ENCODE measurements at regions of chr17 and their contacts with region 1.

Region 1: DNA sequence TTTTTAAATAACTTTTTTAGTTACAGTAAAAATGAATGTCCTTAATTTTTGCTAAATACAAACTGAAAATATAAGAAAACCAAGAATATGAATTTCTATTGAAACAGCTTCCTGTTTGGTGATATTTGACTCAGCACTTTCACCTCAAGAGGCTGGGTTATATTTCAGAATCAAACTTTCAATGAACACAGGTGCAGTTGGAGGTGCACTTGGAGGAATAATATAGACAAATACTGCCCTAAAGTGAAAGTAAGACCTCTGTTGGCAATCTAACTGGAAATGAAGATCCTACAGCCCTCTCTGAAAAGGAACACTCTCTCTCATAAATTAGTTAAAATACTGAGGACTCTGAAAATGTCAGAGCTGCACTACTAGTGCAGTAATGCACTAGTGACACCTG is 106.2 kb downstream of the BRIP1 start:
- DNase-seq: peak; percentile 10
- H3K4me3 ChIP-seq: no peak overlapping the region
- H3K27ac ChIP-seq: no peak overlapping the region
- H3K4me1 ChIP-seq: peaks cover 10% of the 10 kb centered on the region
- CTCF ChIP-seq: no peak

Region 2: GRCh38 chr17:61574542-61575174 is 182.5 kb before region 1 on chr17:
- CTCF ChIA-PET with region 1: no interaction called
- POLR2A ChIA-PET with region 1: no interaction called
- intact Hi-C with region 1: no loop called
- DNase-seq: peak; percentile 65
- H3K4me3 ChIP-seq: no peak overlapping the region
- H3K27ac ChIP-seq: no peak overlapping the region
- H3K4me1 ChIP-seq: no peaks in the 10 kb centered on the region
- CTCF ChIP-seq: peak; percentile 73

Region 3: DNA sequence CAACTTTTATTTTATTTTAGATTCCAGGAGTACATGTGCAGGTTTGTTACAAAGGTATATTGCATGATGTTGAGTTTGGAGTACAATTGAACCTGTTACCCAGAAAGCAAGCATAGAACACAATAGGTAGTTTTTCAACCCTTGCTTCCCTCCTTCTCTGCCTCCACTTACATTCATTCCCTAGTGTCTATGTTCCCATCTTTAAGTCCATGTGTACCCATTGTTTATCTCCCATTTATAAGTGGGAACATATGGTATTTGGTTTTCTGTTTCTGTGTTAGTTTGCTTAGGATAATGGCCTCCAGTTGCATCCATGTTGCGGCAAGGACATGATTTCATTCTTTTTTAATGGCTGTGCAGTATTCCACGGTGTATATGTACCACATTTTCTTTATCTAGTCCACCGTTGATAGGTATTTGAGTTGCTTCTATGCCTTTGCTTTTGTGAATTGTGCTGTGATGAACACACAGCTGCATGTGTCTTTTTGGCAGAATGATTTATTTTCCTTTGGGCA is 52.2 kb before region 1 on chr17:
- CTCF ChIA-PET with region 1: no interaction called
- POLR2A ChIA-PET with region 1: no interaction called
- intact Hi-C with region 1: loop called (anchors 5 kb)
- DNase-seq: no peak
- H3K4me3 ChIP-seq: no peak overlapping the region
- H3K27ac ChIP-seq: no peak overlapping the region
- H3K4me1 ChIP-seq: no peaks in the 10 kb centered on the region
- CTCF ChIP-seq: no peak

Region 4: DNA sequence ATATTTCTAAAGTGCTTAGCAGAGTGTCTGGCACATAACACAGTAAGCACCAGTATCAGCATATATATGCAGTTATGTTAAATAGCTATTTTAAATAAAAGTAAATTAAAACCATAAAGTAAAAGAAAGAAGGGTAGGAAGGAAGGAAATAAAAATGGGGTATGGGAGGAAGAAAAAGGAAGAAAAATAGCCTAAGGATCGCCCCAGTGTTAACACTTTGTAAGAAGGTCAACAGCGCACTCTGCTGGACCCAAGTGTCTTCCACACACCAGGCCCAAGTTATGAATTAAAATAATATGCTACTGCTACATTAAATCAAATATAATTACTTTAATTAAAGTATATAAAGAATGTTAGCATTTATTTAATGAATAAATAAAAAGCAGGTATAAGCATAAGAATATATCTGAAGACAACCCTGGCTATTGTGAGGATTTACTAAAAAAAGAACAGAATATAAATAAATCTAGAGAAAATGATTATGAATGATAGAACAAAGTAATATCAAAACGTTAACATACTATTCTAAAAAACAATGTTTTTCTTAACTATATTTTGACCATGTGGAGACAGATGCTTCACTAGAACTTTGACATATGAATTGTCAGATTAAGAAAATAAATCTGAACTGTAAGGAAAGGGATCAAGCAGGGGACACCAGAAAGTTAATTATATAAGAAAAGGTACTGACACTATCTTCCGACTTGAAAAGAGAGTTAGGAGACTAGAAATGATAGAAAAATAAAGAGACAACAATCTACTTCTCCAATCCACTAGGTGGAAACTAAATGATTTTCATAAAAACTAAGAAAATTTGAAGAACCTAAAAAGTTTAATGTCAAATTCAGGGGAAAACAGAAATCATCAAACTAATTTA is 80.2 kb after region 1 on chr17:
- CTCF ChIA-PET with region 1: no interaction called
- POLR2A ChIA-PET with region 1: no interaction called
- intact Hi-C with region 1: no loop called
- DNase-seq: peak; percentile 76
- H3K4me3 ChIP-seq: no peak overlapping the region
- H3K27ac ChIP-seq: no peak overlapping the region
- H3K4me1 ChIP-seq: no peaks in the 10 kb centered on the region
- CTCF ChIP-seq: peak; percentile 94

Region 5: DNA sequence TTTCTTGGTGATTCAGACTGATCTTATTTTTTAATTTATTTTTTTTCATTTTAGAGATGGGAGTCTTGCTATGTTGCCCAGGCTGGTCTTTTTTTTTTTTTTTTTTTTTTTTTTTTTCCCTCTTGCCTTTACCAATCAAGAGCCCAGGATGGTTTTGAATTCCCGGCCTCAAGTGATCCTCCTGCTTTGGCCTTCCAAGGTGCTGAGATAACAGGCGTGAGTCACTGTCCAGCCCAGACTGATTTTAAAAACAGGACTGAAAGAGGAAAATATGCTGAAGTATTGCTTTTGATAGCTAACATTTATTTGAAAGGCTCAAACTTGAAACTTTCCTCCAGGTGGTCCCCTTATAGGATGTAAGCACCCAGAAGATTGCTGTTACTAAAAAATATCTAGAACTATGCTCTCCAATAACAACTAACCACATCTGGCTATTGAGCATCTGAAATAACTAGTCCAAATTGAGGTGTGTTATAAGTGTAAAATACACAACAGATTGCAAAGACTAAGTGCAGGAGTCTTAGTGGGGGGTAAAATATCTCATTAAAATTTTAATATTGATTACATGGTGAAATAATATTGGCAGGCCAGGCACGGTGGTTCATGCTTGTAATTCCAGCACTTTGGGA is 121.9 kb after region 1 on chr17:
- CTCF ChIA-PET with region 1: no interaction called
- POLR2A ChIA-PET with region 1: no interaction called
- intact Hi-C with region 1: no loop called
- DNase-seq: no peak
- H3K4me3 ChIP-seq: no peak overlapping the region
- H3K27ac ChIP-seq: no peak overlapping the region
- H3K4me1 ChIP-seq: peaks cover 5% of the 10 kb centered on the region
- CTCF ChIP-seq: no peak